Posterior vena cava (tissue), 2 donors: ENCODE measurements at regions of chr22 and their contacts with region 1.

Region 1: DNA sequence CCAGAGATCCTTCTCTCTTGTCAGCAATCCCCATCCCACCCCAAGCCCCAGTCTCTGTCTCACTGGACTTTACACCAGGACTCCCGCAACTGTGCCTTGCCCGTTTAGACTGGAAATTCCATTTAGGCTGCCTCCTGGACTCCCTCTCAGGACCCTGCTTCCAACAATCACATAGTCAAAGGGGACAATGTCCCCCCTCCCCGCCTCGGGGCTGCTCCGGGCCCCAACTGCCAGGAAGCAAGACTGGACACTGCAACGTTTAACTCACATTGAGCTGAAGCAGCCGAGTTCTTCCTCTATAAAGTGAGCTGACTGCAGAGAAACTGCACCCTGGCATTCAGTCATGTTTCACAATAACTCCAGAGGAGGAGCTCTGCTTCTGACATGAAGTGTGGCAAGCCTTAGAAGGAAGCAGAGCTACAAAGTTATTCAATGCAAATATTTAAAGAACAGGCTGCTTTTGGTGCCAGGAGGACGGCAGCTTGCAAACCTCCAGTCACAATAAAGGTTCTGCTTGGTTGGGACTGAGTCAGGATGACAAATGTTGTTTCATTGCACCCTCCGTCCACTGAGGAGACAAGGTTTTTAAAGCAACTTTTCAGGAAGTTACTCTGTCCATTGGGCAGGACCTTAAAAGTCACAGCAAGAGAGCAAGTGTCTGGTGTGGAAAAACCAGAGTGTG is 19.9 kb downstream of the PACSIN2 start:
- DNase-seq: no peak

Region 2: GRCh38 chr22:42933481-42934091 is 61.4 kb before region 1 on chr22:
- intact Hi-C with region 1: loop called in 1 of 2 experiments (anchors 10 kb)
- DNase-seq: no peak